AG04449 (cell line): ENCODE measurements at regions of chr7 and their contacts with region 1.

Region 1: DNA sequence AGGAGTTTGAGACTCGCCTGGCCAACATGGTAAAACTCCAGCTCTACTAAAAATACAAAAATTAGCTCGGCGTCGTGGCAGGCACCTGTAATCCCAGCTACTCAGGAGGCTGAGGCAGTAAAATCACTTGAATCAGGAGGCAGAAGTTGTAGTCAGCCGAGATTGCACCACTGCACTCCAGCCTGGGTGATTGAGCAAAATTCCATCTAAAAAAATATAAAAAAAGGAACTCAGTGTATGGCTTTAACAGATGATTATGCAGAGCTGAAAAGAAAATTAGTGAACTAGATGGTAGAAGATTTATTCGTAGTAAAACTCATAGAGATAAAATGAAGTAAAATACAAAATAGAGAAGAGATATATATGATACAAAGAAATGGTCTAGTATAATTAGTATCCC is 12.6 kb upstream of the CNOT4 start:
- DNase-seq: no peak
- H3K4me3 ChIP-seq: no peak overlapping the region
- CTCF ChIP-seq: no peak

Region 2: DNA sequence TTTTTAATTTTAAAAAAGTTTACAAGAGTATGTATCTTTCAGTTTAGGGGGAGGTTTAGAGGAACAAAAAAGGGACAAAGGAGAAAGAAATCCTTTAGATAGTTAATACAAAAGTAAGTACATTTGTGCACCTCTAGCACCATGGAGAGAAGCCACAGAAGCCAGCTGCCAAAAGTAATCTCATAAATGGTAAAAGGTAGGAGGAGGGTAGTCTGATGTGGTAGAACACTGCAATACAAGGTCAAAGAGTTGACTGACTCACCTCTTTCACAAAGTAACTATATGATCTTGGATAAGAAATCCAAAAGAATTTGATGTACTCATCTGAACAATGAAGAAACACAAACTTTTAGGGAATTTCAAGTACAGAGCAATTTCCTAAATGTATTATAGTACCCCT is 80.7 kb before region 1 on chr7:
- CTCF ChIA-PET with region 1: no interaction called
- POLR2A ChIA-PET with region 1: no interaction called
- DNase-seq: no peak
- H3K4me3 ChIP-seq: no peak overlapping the region
- CTCF ChIP-seq: no peak

Region 3: GRCh38 chr7:135499818-135500217 is 22.7 kb before region 1 on chr7:
- CTCF ChIA-PET with region 1: no interaction called
- POLR2A ChIA-PET with region 1: no interaction called
- DNase-seq: no peak
- H3K4me3 ChIP-seq: no peak overlapping the region
- CTCF ChIP-seq: no peak

Region 4: DNA sequence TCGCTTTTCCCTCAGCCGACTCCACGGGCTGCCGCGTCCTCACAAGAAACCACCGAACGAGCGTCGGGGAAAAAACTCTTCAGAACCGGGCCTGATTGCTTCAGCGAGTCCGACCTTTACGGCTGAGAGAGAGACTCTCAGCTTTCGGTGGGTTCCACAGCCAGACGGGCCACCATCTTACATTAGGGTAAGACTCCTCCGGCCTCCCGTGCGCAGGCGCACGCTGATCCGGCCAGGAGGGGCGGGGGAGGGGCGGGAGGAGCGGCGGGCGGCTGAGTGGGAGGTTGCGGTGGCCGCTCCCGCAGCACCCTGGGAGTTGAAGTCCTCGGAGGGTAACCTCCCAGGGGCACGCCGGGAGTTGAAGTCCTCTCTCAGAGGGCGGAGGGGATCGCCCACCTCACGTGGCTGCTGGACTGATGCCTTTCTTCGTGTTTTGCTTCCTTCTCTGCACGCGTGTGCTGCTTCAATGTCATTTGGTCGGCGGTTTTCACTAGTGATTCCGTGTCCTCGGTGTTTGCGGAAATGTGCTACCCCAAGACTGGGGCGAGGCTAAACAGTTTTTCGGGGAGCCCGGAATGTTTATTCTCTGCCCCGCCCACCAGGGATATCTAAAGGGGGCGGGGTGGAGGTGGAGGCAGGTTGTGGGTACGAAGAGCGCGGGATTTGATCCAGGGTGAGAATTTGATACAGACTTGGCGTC is 12.5 kb before region 1 on chr7 and contains the start of gene CNOT4:
- CTCF ChIA-PET with region 1: interaction called, 11 read pairs
- POLR2A ChIA-PET with region 1: interaction called, 3 read pairs
- DNase-seq: peak; percentile 47
- H3K4me3 ChIP-seq: peak within 1 kb of the TSS; percentile 91
- CTCF ChIP-seq: no peak

Region 5: DNA sequence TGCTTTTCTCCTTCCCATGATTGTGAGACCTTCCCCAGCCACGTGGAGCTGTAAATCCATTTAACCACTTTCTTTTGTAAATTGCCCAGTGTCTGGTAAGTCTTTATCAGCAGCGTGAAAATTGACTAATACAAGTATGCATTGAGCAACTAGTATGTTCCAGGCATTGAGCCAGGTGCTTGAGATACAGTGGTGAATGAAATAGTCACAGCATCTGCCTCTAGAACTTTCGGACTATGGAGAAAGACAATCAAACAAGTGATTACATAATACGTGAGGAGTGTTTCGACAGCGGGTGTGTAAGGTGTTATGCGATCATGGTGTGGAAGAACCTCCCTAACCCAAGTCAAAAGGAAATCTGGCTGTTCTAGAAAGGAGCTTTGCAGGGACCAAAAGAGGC is 13.6 kb after region 1 on chr7:
- CTCF ChIA-PET with region 1: no interaction called
- POLR2A ChIA-PET with region 1: no interaction called
- DNase-seq: no peak
- H3K4me3 ChIP-seq: no peak overlapping the region
- CTCF ChIP-seq: no peak